ENCODE measurements at regions of chr6 and their contacts with region 1.

Region 1: DNA sequence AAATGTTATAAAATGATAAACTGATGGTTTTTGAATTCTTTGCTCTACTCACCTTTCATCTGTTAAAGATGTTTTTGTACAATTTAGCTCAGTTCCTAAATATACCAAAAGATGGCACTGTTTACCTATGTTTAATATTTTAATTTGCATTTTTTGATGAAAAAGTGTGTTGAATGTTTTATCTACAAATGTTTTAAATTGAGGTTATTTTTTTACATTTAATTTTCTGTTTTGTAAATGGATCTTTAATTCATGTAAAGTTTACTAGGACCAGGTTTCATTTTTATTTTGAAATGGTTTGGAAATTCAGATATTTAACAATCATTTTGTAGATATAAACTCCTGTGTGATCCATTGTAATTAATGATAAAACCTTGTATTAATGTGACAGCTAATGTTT is 30.0 kb downstream of the CDKAL1 start:
- DNase-seq: peak in 1 of 35 experiments; percentile 52
- ATAC-seq: no peak
- H3K4me3 ChIP-seq: no peak overlapping the region
- H3K4me3 Mint-ChIP-seq: no peak overlapping the region
- H3K27ac ChIP-seq: no peak overlapping the region
- H3K27ac Mint-ChIP-seq: no peak overlapping the region
- H3K4me1 ChIP-seq: peaks cover 0 to 15% of the 10 kb centered on the region in 2 experiments
- H3K4me1 Mint-ChIP-seq: peaks cover 9 to 12% (median 12%) of the 10 kb centered on the region in 3 donors
- H3K27me3 ChIP-seq: no peaks in the 10 kb centered on the region
- H3K27me3 Mint-ChIP-seq: no peaks in the 10 kb centered on the region

Region 2: DNA sequence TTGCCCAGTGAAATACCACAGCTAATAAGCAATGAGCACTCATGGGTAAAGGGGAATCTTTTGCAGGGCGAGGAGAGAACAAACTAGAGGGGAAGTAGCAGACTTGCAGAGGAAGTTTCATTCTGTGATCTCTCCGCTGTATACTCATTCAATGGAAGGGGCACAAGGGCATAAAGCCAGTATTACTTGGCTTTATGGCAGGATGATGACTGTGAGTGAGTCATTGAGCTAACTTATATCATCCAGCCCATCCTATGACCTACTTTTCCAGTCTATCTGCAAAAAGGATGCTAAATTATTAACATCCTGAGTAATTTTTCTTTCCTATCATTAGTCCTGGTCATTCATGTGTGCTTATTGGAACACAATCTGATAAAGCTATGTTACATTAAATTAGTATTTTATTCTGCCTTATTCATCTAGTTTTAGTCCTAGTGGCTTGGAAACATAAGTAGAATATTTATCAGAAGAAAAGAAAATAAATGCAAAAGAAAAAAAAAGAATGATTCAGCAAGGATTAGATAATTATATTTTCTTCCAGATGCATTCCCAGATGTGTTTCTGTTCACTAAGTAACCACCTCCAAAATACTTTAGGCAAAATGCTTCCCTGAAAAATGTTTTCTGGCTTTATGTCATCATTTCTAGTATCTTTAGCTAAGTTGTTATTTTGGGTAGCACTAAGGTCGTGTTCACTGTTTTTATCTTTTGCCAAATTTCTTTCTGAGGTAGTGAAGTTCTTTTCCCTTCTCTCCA is 441.7 kb after region 1 on chr6:
- CTCF ChIA-PET with region 1: no interaction called
- POLR2A ChIA-PET with region 1: interaction called in 1 of 2 experiments, 11 read pairs
- DNase-seq: no peak
- ATAC-seq: no peak
- H3K4me3 ChIP-seq: no peak overlapping the region
- H3K4me3 Mint-ChIP-seq: no peak overlapping the region
- H3K27ac ChIP-seq: no peak overlapping the region
- H3K27ac Mint-ChIP-seq: no peak overlapping the region
- H3K4me1 ChIP-seq: no peaks in the 10 kb centered on the region
- H3K4me1 Mint-ChIP-seq: no peaks in the 10 kb centered on the region
- H3K27me3 ChIP-seq: no peaks in the 10 kb centered on the region
- H3K27me3 Mint-ChIP-seq: no peaks in the 10 kb centered on the region